ENCODE measurements at regions of chr14 and their contacts with region 1.

Region 1: GRCh38 chr14:87805315-87805723 is 187.7 kb downstream of the GALC start:
- DNase-seq: peak; percentile 29 to 88
- H3K4me3 ChIP-seq: no peak overlapping the region
- H3K27ac ChIP-seq: no peak overlapping the region
- H3K4me1 ChIP-seq: no peaks in the 10 kb centered on the region
- H3K27me3 ChIP-seq: no peaks in the 10 kb centered on the region
- CTCF ChIP-seq: peak; percentile 70 to 92 (median 70)
- EP300 ChIP-seq: no peak
- POLR2A ChIP-seq: no peak
- RAD21 ChIP-seq: peak; percentile 51 to 62

Region 2: GRCh38 chr14:87785897-87786296 is 19.4 kb before region 1 on chr14:
- CTCF ChIA-PET with region 1: interaction called, 41 read pairs
- POLR2A ChIA-PET with region 1: no interaction called
- DNase-seq: no peak
- H3K4me3 ChIP-seq: no peak overlapping the region
- H3K27ac ChIP-seq: no peak overlapping the region
- H3K4me1 ChIP-seq: no peaks in the 10 kb centered on the region
- H3K27me3 ChIP-seq: no peaks in the 10 kb centered on the region
- CTCF ChIP-seq: no peak
- EP300 ChIP-seq: no peak
- POLR2A ChIP-seq: no peak
- RAD21 ChIP-seq: no peak

Region 3: GRCh38 chr14:87824266-87824665 is 18.9 kb after region 1 on chr14:
- CTCF ChIA-PET with region 1: interaction called, 12 read pairs
- POLR2A ChIA-PET with region 1: no interaction called
- DNase-seq: no peak
- H3K4me3 ChIP-seq: no peak overlapping the region
- H3K27ac ChIP-seq: no peak overlapping the region
- H3K4me1 ChIP-seq: no peaks in the 10 kb centered on the region
- H3K27me3 ChIP-seq: no peaks in the 10 kb centered on the region
- CTCF ChIP-seq: no peak
- EP300 ChIP-seq: no peak
- POLR2A ChIP-seq: no peak
- RAD21 ChIP-seq: no peak

Region 4: DNA sequence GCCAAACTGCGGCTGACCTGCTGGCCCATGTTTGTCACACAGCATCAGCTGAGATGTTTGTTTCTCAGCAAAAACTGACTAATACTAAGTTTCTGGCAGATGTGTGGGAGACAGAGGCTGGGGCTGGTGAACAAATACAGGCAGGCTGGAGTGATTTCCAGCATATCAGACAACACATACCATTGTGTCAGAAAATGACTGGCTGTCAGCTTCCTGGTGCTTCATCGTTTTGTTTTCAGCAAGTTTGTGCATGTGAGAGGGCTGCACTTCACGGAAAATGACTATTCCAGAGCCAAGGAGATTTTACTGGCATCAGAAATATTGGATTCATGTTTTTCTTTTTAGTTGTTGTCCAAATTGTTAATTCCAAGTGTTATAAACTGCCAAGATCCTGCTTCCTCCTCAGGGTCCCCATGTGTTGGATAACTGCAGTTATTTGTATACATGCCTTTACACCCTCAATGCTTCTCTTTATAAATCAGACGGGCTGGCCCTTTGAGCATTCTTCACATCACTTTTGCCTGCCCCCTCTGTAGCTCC is 42.0 kb after region 1 on chr14:
- CTCF ChIA-PET with region 1: interaction called, 23 read pairs
- POLR2A ChIA-PET with region 1: no interaction called
- DNase-seq: no peak
- H3K4me3 ChIP-seq: no peak overlapping the region
- H3K27ac ChIP-seq: no peak overlapping the region
- H3K4me1 ChIP-seq: no peaks in the 10 kb centered on the region
- H3K27me3 ChIP-seq: no peaks in the 10 kb centered on the region
- CTCF ChIP-seq: no peak
- EP300 ChIP-seq: no peak
- POLR2A ChIP-seq: no peak
- RAD21 ChIP-seq: no peak

Region 5: DNA sequence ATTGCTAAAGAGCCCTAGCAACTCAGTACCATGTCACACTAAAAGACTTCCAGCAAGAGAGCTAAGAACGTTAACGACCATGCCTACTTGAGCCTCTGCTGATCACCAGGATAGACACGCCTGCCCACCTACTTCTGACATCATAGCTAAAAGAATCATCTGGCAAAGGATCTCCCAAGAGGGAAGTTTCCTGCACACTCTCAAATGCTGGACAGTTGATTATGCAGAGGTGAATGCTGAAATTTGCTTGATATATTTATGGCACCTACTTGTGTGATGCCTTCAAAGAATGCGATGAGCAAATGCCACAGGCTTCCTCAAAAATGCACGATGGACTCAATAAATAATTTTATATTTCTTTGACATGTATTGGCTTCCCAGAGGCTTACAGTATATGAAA is 74.1 kb after region 1 on chr14:
- CTCF ChIA-PET with region 1: interaction called, 10 read pairs
- POLR2A ChIA-PET with region 1: no interaction called
- DNase-seq: no peak
- H3K4me3 ChIP-seq: no peak overlapping the region
- H3K27ac ChIP-seq: no peak overlapping the region
- H3K4me1 ChIP-seq: no peaks in the 10 kb centered on the region
- H3K27me3 ChIP-seq: no peaks in the 10 kb centered on the region
- CTCF ChIP-seq: no peak
- EP300 ChIP-seq: no peak
- POLR2A ChIP-seq: no peak
- RAD21 ChIP-seq: no peak

Region 6: GRCh38 chr14:87888229-87888999 is 83.1 kb after region 1 on chr14:
- CTCF ChIA-PET with region 1: interaction called, 62 read pairs
- POLR2A ChIA-PET with region 1: no interaction called
- DNase-seq: peak; percentile 39 to 89
- H3K4me3 ChIP-seq: no peak overlapping the region
- H3K27ac ChIP-seq: no peak overlapping the region
- H3K4me1 ChIP-seq: no peaks in the 10 kb centered on the region
- H3K27me3 ChIP-seq: no peaks in the 10 kb centered on the region
- CTCF ChIP-seq: peak; percentile 78 to 88 (median 87)
- EP300 ChIP-seq: no peak
- POLR2A ChIP-seq: no peak
- RAD21 ChIP-seq: peak; percentile 49 to 63

Region 7: DNA sequence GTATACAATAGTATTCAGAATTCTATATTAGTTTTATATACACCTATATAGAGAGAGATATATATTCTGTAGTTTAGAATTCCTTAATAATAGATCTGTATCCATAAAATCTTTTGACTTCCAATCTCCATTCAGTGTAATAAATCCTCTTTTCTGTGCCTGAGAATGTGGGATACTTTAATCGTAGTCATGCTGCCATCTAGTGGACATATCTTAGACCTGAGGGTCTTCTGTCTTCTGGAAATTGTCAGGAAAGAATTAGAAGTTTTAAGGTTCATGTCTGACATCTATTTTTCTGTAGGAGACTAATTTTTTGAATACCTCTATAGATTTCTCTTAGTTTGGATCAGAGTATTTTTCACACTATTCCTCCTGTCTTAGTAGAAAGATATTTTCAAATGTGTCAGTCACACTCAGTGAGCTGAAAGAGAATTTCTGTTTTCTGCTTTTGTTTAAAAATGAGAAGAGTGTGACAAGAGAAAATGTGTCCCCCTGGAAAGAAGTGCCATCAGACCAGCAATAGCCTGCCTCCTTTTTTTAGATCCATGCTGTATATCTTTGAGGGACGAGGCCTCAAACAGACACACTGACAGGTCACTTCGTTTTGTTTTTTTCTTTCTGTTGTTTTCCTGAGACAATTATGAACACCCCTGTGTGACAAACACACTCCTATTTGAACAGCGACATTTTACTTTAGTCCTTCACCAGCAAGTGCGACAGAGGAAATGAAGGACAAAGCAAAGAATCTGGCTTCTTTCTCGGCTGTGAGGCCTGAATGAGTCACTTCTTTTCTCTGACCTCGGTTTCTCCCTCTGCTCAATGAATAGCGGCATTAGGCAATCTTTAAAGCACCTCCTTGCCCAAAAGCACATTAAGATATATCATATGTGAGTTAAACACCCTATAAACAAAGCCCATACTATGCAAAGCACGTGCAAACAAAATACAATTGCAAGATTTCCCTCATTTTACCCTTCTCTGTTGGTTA is 91.4 kb after region 1 on chr14:
- CTCF ChIA-PET with region 1: interaction called, 62 read pairs
- POLR2A ChIA-PET with region 1: no interaction called
- DNase-seq: no peak
- H3K4me3 ChIP-seq: no peak overlapping the region
- H3K27ac ChIP-seq: no peak overlapping the region
- H3K4me1 ChIP-seq: no peaks in the 10 kb centered on the region
- H3K27me3 ChIP-seq: no peaks in the 10 kb centered on the region
- CTCF ChIP-seq: peak in 2 of 3 experiments; percentile 55 to 59; a peak in 2 of 4 replicates
- EP300 ChIP-seq: no peak
- POLR2A ChIP-seq: no peak
- RAD21 ChIP-seq: peak; percentile 80 to 82

Measured in H1 (cell line).